ENCODE measurements at regions of chr15 and their contacts with region 1.

Region 1: DNA sequence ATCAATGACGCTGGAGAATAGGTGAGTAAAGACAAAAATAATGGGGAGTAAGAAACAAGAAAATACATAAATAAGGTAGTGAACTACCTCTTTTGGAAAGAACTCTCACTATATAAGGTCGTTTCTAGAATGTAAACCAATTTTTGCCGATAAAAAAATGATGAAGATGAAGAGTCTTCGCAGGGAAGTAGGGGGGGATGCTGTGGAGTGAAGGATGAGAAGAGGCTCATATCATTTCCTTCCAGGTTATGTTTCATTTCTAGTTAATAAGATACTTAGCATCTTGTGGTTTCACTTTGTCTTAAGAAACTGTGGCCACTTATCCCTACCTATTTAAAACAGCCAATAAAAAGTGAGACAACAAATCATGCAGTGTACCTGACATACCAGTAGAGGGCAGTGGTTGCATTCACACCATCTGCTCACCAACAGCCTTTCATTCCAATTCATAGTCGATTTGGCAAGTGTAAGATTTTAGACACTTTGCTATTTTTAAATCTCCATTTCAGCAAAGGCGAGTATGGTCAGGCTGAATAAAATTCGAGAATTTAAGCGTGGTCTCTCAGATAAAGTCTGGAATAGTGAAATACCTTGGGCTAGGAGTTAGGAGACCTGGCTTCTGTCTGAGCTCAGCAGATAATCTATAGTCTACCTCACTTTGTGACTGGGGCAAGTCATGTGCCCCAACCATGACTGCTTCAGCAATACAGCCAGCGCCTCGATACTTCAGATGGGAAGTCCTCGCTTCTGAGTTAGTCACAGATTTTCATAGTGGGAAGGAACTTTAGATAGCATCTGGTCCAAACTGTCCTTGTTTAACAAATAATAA is 28.9 kb upstream of the ICE2 start:
- DNase-seq: peak; percentile 72
- CTCF ChIP-seq: peak; percentile 79

Region 2: GRCh38 chr15:60358935-60359682 is 148.7 kb before region 1 on chr15:
- in situ Hi-C with region 1: loop called (anchors 10 kb)
- DNase-seq: no peak
- CTCF ChIP-seq: no peak

Measured in GM13976 (cell line).